ENCODE measurements at regions of chr19 and their contacts with region 1.

Region 1: GRCh38 chr19:5967994-5968430 is 9.9 kb downstream of the RANBP3 start:
- DNase-seq: peak; percentile 34 to 68 (median 49)
- H3K4me3 ChIP-seq: no peak overlapping the region
- H3K4me3 Mint-ChIP-seq: peak overlapping the region in 3 of 7 donors; percentile 7 to 92 (median 67)
- H3K27ac ChIP-seq: peak overlapping the region; percentile 43
- H3K27ac Mint-ChIP-seq: peak overlapping the region; percentile 43 to 91 (median 88)
- H3K4me1 ChIP-seq: peaks cover 77% of the 10 kb centered on the region
- H3K4me1 Mint-ChIP-seq: peaks cover 70 to 95% (median 84%) of the 10 kb centered on the region in 3 donors
- H3K27me3 ChIP-seq: no peaks in the 10 kb centered on the region
- H3K27me3 Mint-ChIP-seq: no peaks in the 10 kb centered on the region

Region 2: DNA sequence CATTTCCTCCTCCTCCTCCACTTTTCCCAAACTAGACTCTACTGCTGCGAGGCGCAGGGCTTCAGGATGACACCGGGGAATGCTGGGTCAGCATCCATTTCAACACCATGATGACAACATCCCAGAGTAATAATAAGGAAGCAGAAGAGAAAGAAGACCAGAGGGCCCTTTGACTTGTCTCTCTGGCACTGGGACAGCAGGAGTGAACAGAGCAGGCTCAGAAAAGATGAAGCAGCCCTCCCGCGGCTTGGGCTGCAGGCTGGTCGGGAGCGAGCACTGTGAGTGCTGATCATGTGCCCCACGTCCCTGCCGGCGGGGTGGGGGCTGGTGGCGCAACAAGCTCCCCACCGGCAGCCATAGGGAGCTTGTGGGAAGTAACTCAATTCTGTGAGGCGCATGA is 20.6 kb before region 1 on chr19:
- CTCF ChIA-PET with region 1: interaction called, 31 read pairs
- POLR2A ChIA-PET with region 1: no interaction called
- DNase-seq: no peak
- H3K4me3 ChIP-seq: no peak overlapping the region
- H3K4me3 Mint-ChIP-seq: peak overlapping the region in 2 of 7 donors; percentile 37 to 59
- H3K27ac ChIP-seq: no peak overlapping the region
- H3K27ac Mint-ChIP-seq: peak overlapping the region in 7 of 8 donors; percentile 68 to 88 (median 83)
- H3K4me1 ChIP-seq: peaks cover 65% of the 10 kb centered on the region
- H3K4me1 Mint-ChIP-seq: peaks cover 67 to 86% (median 70%) of the 10 kb centered on the region in 3 donors
- H3K27me3 ChIP-seq: no peaks in the 10 kb centered on the region
- H3K27me3 Mint-ChIP-seq: peaks cover 0 to 1% of the 10 kb centered on the region in 2 donors

Region 3: GRCh38 chr19:5953680-5954213 is 14.3 kb before region 1 on chr19:
- CTCF ChIA-PET with region 1: interaction called, 31 read pairs
- POLR2A ChIA-PET with region 1: no interaction called
- DNase-seq: peak in 1 of 5 donors; percentile 36
- H3K4me3 ChIP-seq: peak overlapping the region; percentile 52
- H3K4me3 Mint-ChIP-seq: peak overlapping the region; percentile 11 to 87 (median 67)
- H3K27ac ChIP-seq: peak overlapping the region; percentile 35
- H3K27ac Mint-ChIP-seq: peak overlapping the region; percentile 36 to 92 (median 85)
- H3K4me1 ChIP-seq: peaks cover 79% of the 10 kb centered on the region
- H3K4me1 Mint-ChIP-seq: peaks cover 81 to 95% (median 89%) of the 10 kb centered on the region in 3 donors
- H3K27me3 ChIP-seq: no peaks in the 10 kb centered on the region
- H3K27me3 Mint-ChIP-seq: peaks cover 0 to 1% of the 10 kb centered on the region in 2 donors

Region 4: GRCh38 chr19:5987077-5987818 is 19.2 kb after region 1 on chr19:
- CTCF ChIA-PET with region 1: interaction called, 43 read pairs
- POLR2A ChIA-PET with region 1: no interaction called
- DNase-seq: peak; percentile 53 to 77 (median 66)
- H3K4me3 ChIP-seq: peak overlapping the region; percentile 56
- H3K4me3 Mint-ChIP-seq: peak overlapping the region; percentile 17 to 90 (median 76)
- H3K27ac ChIP-seq: no peak overlapping the region
- H3K27ac Mint-ChIP-seq: peak overlapping the region in 5 of 8 donors; percentile 8 to 48 (median 31)
- H3K4me1 ChIP-seq: peaks cover 17% of the 10 kb centered on the region
- H3K4me1 Mint-ChIP-seq: peaks cover 21 to 25% (median 24%) of the 10 kb centered on the region in 3 donors
- H3K27me3 ChIP-seq: no peaks in the 10 kb centered on the region
- H3K27me3 Mint-ChIP-seq: peaks cover 0 to 6% of the 10 kb centered on the region in 2 donors

Region 5: GRCh38 chr19:6021878-6022569 is 54.0 kb after region 1 on chr19:
- CTCF ChIA-PET with region 1: interaction called, 19 read pairs
- POLR2A ChIA-PET with region 1: no interaction called
- DNase-seq: peak; percentile 58 to 79 (median 66)
- H3K4me3 ChIP-seq: no peak overlapping the region
- H3K4me3 Mint-ChIP-seq: no peak overlapping the region
- H3K27ac ChIP-seq: no peak overlapping the region
- H3K27ac Mint-ChIP-seq: no peak overlapping the region
- H3K4me1 ChIP-seq: no peaks in the 10 kb centered on the region
- H3K4me1 Mint-ChIP-seq: no peaks in the 10 kb centered on the region
- H3K27me3 ChIP-seq: no peaks in the 10 kb centered on the region
- H3K27me3 Mint-ChIP-seq: peaks cover 5 to 17% of the 10 kb centered on the region in 2 donors

Region 6: GRCh38 chr19:6076675-6077463 is 108.9 kb after region 1 on chr19:
- CTCF ChIA-PET with region 1: no interaction called
- POLR2A ChIA-PET with region 1: no interaction called
- DNase-seq: no peak
- H3K4me3 ChIP-seq: no peak overlapping the region
- H3K4me3 Mint-ChIP-seq: no peak overlapping the region
- H3K27ac ChIP-seq: no peak overlapping the region
- H3K27ac Mint-ChIP-seq: no peak overlapping the region
- H3K4me1 ChIP-seq: no peaks in the 10 kb centered on the region
- H3K4me1 Mint-ChIP-seq: no peaks in the 10 kb centered on the region
- H3K27me3 ChIP-seq: no peaks in the 10 kb centered on the region
- H3K27me3 Mint-ChIP-seq: peaks cover 7 to 20% of the 10 kb centered on the region in 2 donors

Measured in CD8-positive, alpha-beta memory T cell (primary cell).